A673 (cell line): ENCODE measurements at regions of chr17 and their contacts with region 1.

Region 1: DNA sequence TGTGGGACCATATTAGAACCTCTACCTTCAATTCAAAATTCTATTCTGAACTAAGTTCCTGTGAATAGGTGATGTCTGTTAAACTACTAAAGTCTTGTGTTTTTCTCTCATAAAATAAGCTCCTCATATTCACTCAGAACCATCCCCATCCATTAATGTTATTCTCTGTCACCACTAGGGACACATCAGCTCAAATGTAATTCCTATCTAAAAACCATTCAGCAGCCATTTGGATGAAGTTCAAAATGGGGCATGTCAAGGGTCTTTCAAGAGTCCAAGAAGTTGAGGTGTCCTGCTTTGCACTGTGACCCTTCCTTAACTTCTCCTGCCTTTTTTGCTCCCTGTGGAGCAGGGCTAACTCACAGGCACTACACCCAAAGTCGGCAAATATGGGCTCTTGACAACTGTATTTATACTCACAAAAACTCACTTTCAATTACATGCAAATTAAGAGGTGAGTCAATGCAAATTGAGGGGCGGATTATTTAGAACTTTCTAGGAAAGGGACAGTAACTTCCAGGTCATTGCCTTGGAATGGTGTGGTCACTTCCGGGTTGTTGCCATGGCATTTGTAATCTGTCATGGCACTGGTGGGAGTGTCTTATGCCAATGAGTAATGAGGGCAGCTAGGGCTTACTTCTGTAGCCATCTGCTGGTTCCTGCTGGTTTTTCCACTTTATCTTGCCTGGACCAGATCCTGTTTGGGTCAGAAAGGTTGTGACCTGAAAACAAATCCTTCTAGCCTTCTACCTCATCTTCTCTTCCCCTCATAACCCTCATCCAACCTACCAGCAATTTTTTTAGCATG is 128.2 kb upstream of the COX10 start:
- DNase-seq: no peak
- H3K4me3 ChIP-seq: no peak overlapping the region
- H3K27ac ChIP-seq: no peak overlapping the region
- H3K4me1 ChIP-seq: no peaks in the 10 kb centered on the region
- H3K27me3 ChIP-seq: no peaks in the 10 kb centered on the region
- CTCF ChIP-seq: no peak

Region 2: GRCh38 chr17:13576661-13577526 is 364.2 kb before region 1 on chr17:
- CTCF ChIA-PET with region 1: no interaction called
- POLR2A ChIA-PET with region 1: no interaction called
- intact Hi-C with region 1: loop called (anchors 5 kb)
- DNase-seq: no peak
- H3K4me3 ChIP-seq: no peak overlapping the region
- H3K27ac ChIP-seq: no peak overlapping the region
- H3K4me1 ChIP-seq: no peaks in the 10 kb centered on the region
- H3K27me3 ChIP-seq: no peaks in the 10 kb centered on the region
- CTCF ChIP-seq: no peak